Breast epithelium (tissue), 4 donors: ENCODE measurements at regions of chr13 and their contacts with region 1.

Region 1: GRCh38 chr13:44188257-44188656 is 185.4 kb upstream of the SERP2 start:
- DNase-seq: no peak
- H3K4me3 ChIP-seq: no peak overlapping the region
- H3K27ac ChIP-seq: no peak overlapping the region
- H3K4me1 ChIP-seq: no peaks in the 10 kb centered on the region
- H3K27me3 ChIP-seq: no peaks in the 10 kb centered on the region
- CTCF ChIP-seq: no peak
- POLR2A ChIP-seq: no peak

Region 2: GRCh38 chr13:44350775-44351509 is 162.7 kb after region 1 on chr13:
- intact Hi-C with region 1: no loop called
- DNase-seq: no peak
- H3K4me3 ChIP-seq: peak overlapping the region in 1 of 3 donors; percentile 30
- H3K27ac ChIP-seq: peak overlapping the region; percentile 92 to 93
- H3K4me1 ChIP-seq: no peaks in the 10 kb centered on the region
- H3K27me3 ChIP-seq: no peaks in the 10 kb centered on the region
- CTCF ChIP-seq: no peak
- POLR2A ChIP-seq: peak; percentile 13

Region 3: GRCh38 chr13:44652962-44653660 is 464.9 kb after region 1 on chr13:
- intact Hi-C with region 1: loop called (anchors 10 kb)
- DNase-seq: no peak
- H3K4me3 ChIP-seq: no peak overlapping the region
- H3K27ac ChIP-seq: no peak overlapping the region
- H3K4me1 ChIP-seq: no peaks in the 10 kb centered on the region
- H3K27me3 ChIP-seq: no peaks in the 10 kb centered on the region
- CTCF ChIP-seq: no peak
- POLR2A ChIP-seq: no peak